ENCODE measurements at regions of chr12 and their contacts with region 1.

Region 1: DNA sequence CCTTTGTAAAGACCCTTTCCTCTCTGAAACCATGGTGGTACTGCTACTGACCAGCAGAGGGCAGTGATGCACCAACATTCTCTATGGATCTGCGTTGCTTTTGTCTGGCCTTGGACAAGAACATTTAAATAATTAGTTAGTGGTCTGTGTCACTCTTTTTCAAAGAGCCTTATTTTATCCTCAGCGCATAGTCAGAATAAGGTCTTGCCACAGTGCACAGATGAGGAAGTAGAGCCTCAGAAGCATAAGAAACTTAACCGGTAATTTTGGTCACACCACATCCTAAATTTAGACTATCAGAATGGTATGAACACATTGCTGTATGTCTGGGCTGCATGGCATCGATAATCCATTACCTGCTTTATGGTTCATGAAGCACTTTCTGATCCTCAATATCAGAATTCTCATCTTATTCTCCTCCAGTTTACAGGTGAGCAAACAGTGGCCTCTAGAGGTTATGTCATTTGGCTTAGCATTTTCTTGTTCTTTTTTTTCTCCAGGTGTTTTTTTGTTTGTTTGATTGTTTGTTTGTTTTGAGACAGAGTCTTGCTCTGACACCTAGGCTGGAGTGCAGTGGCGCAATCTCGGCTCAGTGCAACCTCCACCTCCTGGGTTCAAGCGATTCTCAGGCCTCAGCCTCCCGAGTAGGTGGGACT is 23.7 kb upstream of the IFT81 start:
- DNase-seq: peak; percentile 70
- ATAC-seq: peak; percentile 53
- H3K4me3 ChIP-seq: peak overlapping the region; percentile 7 to 24 (median 22); a peak in 5 of 6 replicates
- H3K27ac ChIP-seq: no peak overlapping the region
- H3K4me1 ChIP-seq: peaks cover 62% of the 10 kb centered on the region
- H3K27me3 ChIP-seq: no peaks in the 10 kb centered on the region
- CTCF ChIP-seq: peak; percentile 91
- EP300 ChIP-seq: no peak
- POLR2A ChIP-seq: no peak
- RAD21 ChIP-seq: peak; percentile 85

Region 2: GRCh38 chr12:110111476-110112334 is 11.3 kb after region 1 on chr12:
- CTCF ChIA-PET with region 1: interaction called, 6 read pairs
- POLR2A ChIA-PET with region 1: interaction called, 15 read pairs
- in situ Hi-C with region 1: no loop called
- intact Hi-C with region 1: no loop called
- DNase-seq: peak; percentile 99
- ATAC-seq: peak; percentile 90
- H3K4me3 ChIP-seq: peak overlapping the region in 1 of 3 experiments; percentile 25; a peak in 1 of 6 replicates
- H3K27ac ChIP-seq: peak overlapping the region; percentile 99
- H3K4me1 ChIP-seq: peaks cover 98% of the 10 kb centered on the region
- H3K27me3 ChIP-seq: no peaks in the 10 kb centered on the region
- CTCF ChIP-seq: no peak
- EP300 ChIP-seq: peak; percentile 72 to 88; a peak in 2 of 4 replicates
- POLR2A ChIP-seq: peak in 1 of 2 experiments; percentile 38; a peak in 1 of 4 replicates
- RAD21 ChIP-seq: no peak; the same call in 1 of the 2 replicates

Region 3: DNA sequence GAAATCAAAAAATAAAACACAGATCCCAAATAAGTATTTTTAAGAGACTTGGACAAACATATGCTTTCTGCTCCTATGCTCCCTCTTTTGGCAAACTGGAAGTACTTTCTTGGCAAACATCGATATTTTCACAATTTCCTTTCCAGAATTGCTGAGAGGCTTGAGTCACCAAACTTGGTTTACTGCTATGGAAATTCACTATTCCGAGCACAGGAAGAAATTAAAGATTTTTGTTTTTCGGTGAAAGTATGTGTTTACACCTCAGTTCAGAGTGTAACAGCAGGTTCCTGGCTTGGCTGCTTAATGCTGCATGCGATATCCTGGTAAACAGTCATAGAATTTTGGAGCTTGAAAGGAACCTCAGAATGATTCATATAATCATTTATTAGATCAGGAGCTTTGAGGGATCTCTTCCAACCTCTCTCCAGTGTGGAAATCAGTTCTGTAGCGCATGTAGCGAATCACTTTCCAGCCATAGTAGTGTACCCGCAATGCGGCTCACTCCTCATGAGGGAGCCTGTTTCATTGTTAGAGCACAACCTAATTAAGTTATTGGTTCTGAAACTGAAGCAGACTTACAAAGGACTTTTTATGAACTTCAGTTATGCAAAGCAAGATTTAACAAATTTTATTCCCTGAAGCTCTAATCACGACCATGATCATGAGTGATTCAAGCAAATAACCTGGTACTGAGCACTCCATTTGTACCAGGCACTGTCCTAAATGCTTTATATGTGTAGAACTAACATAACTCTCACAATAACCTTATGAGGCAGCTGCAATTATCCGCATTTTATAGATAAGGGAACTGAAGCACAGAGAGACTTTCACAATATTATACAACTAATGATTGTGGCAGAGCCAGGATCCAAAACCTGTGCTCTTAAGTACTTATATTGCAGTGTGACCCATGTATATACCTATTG is 124.2 kb after region 1 on chr12:
- CTCF ChIA-PET with region 1: interaction called, 10 read pairs
- POLR2A ChIA-PET with region 1: no interaction called
- in situ Hi-C with region 1: no loop called
- intact Hi-C with region 1: loop called (anchors 1 kb)
- DNase-seq: peak; percentile 52
- ATAC-seq: peak; percentile 24; the same call in 2 of the 3 replicates
- H3K4me3 ChIP-seq: no peak overlapping the region
- H3K27ac ChIP-seq: no peak overlapping the region
- H3K4me1 ChIP-seq: peaks cover 8% of the 10 kb centered on the region
- H3K27me3 ChIP-seq: no peaks in the 10 kb centered on the region
- CTCF ChIP-seq: peak; percentile 52
- EP300 ChIP-seq: no peak
- POLR2A ChIP-seq: no peak
- RAD21 ChIP-seq: 0 out of 2 replicates have a peak, but pooled peaks have one; percentile 23

Region 4: GRCh38 chr12:110431957-110432587 is 331.6 kb after region 1 on chr12:
- CTCF ChIA-PET with region 1: interaction called, 6 read pairs
- POLR2A ChIA-PET with region 1: interaction called, 3 read pairs
- in situ Hi-C with region 1: loop called (anchors 25 kb)
- intact Hi-C with region 1: loop called (anchors 2 kb)
- DNase-seq: no peak
- ATAC-seq: no peak
- H3K4me3 ChIP-seq: peak overlapping the region in 2 of 3 experiments; percentile 57 to 59; a peak in 2 of 6 replicates
- H3K27ac ChIP-seq: no peak overlapping the region
- H3K4me1 ChIP-seq: no peaks in the 10 kb centered on the region
- H3K27me3 ChIP-seq: no peaks in the 10 kb centered on the region
- CTCF ChIP-seq: no peak
- EP300 ChIP-seq: no peak
- POLR2A ChIP-seq: no peak
- RAD21 ChIP-seq: no peak

Region 5: GRCh38 chr12:110583137-110584059 is 483.0 kb after region 1 on chr12 and contains the start of gene PPTC7:
- CTCF ChIA-PET with region 1: no interaction called
- POLR2A ChIA-PET with region 1: no interaction called
- in situ Hi-C with region 1: loop called (anchors 25 kb)
- intact Hi-C with region 1: no loop called
- DNase-seq: peak; percentile 92
- ATAC-seq: peak; percentile 96
- H3K4me3 ChIP-seq: peak within 1 kb of the TSS; percentile 72 to 98 (median 95)
- H3K27ac ChIP-seq: peak within 1 kb of the TSS; percentile 73
- H3K4me1 ChIP-seq: peaks cover 59% of the 10 kb centered on the region
- H3K27me3 ChIP-seq: no peaks in the 10 kb centered on the region; a peak in 1 of 5 replicates
- CTCF ChIP-seq: no peak
- EP300 ChIP-seq: no peak; a peak in 1 of 4 replicates
- POLR2A ChIP-seq: peak; percentile 70 to 77
- RAD21 ChIP-seq: no peak
- total RNA-seq, gene PPTC7: 4.8 and 8.5 TPM in 2 replicates

Measured in HepG2 (cell line).